ENCODE measurements at regions of chr10 and their contacts with region 1.

Region 1: DNA sequence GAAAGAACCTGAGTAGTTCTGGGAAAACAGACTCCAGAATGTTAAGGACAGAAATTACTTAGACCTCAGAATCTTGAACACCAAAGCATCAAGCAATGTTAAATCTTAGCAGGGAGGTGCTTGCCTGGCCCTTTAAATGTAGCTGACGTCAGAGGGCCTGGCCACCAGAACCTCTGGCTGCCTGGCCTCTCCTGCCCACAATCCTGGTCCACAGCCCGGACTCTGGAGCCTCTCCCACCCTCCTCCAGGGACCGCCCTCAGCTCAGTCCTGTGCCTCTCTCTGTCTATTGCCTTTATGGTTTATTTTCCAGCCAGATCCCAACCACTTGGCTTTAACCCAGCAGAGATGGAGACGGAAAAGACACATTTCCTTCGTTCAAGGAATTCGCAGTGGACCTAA is 42.2 kb upstream of the EGR2 start:
- DNase-seq: no peak
- H3K4me3 Mint-ChIP-seq: no peak overlapping the region
- H3K27ac Mint-ChIP-seq: no peak overlapping the region
- H3K4me1 Mint-ChIP-seq: peaks cover 60% of the 10 kb centered on the region
- H3K27me3 Mint-ChIP-seq: peaks cover 6% of the 10 kb centered on the region

Region 2: GRCh38 chr10:62528441-62528840 is 329.9 kb before region 1 on chr10:
- intact Hi-C with region 1: loop called (anchors 2 kb)
- DNase-seq: no peak
- H3K4me3 Mint-ChIP-seq: no peak overlapping the region
- H3K27ac Mint-ChIP-seq: peak overlapping the region; percentile 1
- H3K4me1 Mint-ChIP-seq: peaks cover 33% of the 10 kb centered on the region
- H3K27me3 Mint-ChIP-seq: peaks cover 9% of the 10 kb centered on the region

Region 3: GRCh38 chr10:62726142-62726541 is 132.2 kb before region 1 on chr10:
- intact Hi-C with region 1: loop called (anchors 1 kb)
- DNase-seq: peak; percentile 16
- H3K4me3 Mint-ChIP-seq: peak overlapping the region; percentile 25
- H3K27ac Mint-ChIP-seq: peak overlapping the region; percentile 72
- H3K4me1 Mint-ChIP-seq: peaks cover 52% of the 10 kb centered on the region
- H3K27me3 Mint-ChIP-seq: peaks cover 8% of the 10 kb centered on the region

Region 4: DNA sequence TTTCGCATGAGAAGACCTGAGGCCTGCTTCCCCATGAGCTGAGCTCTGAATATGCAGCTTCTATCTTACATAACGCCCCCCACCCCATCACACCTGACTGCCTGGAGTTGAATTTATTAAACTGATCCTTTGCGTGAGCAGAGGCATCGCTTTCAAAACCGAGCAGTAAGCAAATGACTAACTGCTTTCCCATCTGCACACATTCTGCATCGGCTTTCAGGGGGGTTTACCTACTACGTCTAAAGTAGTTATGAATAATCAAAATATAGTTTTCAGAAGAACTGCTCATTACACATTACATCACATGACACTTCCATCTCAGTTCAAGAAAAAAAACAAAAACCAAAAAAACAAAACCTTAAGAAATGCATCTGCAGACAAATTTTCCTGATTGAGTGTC is 12.5 kb after region 1 on chr10:
- intact Hi-C with region 1: loop called (anchors 2 kb)
- DNase-seq: no peak
- H3K4me3 Mint-ChIP-seq: no peak overlapping the region
- H3K27ac Mint-ChIP-seq: no peak overlapping the region
- H3K4me1 Mint-ChIP-seq: peaks cover 17% of the 10 kb centered on the region
- H3K27me3 Mint-ChIP-seq: peaks cover 11% of the 10 kb centered on the region

Region 5: GRCh38 chr10:63083904-63084689 is 225.7 kb after region 1 on chr10:
- intact Hi-C with region 1: loop called (anchors 1 kb)
- DNase-seq: peak; percentile 14
- H3K4me3 Mint-ChIP-seq: no peak overlapping the region
- H3K27ac Mint-ChIP-seq: no peak overlapping the region
- H3K4me1 Mint-ChIP-seq: peaks cover 12% of the 10 kb centered on the region
- H3K27me3 Mint-ChIP-seq: peaks cover 28% of the 10 kb centered on the region

Region 6: GRCh38 chr10:63157845-63158624 is 299.7 kb after region 1 on chr10:
- intact Hi-C with region 1: loop called (anchors 2 kb)
- DNase-seq: peak; percentile 29
- H3K4me3 Mint-ChIP-seq: no peak overlapping the region
- H3K27ac Mint-ChIP-seq: no peak overlapping the region
- H3K4me1 Mint-ChIP-seq: peaks cover 24% of the 10 kb centered on the region
- H3K27me3 Mint-ChIP-seq: no peaks in the 10 kb centered on the region

Region 7: DNA sequence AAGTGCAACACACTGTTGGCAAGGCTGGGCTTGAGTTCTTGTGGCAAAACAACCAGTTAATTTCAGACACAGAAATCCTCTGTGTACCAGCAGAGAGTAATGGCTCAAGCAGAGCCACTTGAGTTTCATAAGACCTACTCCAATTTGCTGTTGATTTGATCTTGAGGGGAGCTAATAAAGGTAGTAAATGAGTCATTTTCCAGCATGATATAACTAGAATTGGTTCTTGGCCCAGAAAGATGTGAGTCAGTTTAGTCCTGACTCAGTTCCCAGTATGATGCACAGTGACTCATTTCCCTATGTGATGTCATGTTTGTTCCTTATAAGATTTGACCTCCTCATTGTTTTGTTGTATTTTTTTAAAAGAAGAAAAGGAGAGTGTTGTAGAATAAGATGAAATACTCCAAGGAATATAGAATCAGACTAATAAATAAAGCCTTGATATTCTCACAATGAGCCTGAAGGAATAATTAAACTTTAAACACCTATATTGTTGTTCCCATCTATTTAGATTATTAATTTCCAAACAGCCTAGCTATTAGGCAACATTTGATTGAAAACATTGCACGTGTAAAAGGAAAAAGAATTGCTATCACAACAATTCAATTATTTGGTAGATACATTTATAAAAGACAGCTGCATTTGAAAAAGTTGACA is 849.0 kb after region 1 on chr10:
- intact Hi-C with region 1: loop called (anchors 1 kb)
- DNase-seq: peak; percentile 19
- H3K4me3 Mint-ChIP-seq: peak overlapping the region; percentile 3
- H3K27ac Mint-ChIP-seq: peak overlapping the region; percentile 61
- H3K4me1 Mint-ChIP-seq: peaks cover 22% of the 10 kb centered on the region
- H3K27me3 Mint-ChIP-seq: no peaks in the 10 kb centered on the region